ENCODE measurements at regions of chr2 and their contacts with region 1.

Region 1: DNA sequence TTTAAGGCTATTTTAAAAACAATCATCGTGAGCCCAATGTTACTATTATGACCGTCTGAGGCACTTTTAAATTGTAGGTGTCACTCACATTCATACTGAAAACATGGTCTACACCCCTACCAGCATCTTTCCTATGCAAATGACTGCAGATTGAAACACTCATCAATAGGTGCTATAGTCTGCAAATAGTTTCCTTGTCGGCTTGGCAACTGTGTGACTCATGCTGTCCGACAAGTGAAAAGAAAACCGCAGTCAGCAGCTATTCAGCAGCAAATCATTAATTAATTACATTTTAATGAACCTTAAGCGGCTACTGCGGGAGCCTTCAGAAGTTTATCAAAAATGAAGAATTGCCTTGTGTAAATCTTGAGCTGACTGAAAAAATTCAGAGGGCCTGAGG is 134.4 kb downstream of the FIGN start:
- DNase-seq: no peak
- ATAC-seq: no peak

Region 2: GRCh38 chr2:163291790-163292189 is 309.6 kb before region 1 on chr2:
- intact Hi-C with region 1: no loop called
- DNase-seq: no peak
- ATAC-seq: no peak

Region 3: GRCh38 chr2:163471947-163472346 is 129.4 kb before region 1 on chr2:
- intact Hi-C with region 1: loop called in 1 of 2 experiments (anchors 10 kb)
- DNase-seq: no peak
- ATAC-seq: peak; percentile 53 to 57